ENCODE measurements at regions of chr12 and their contacts with region 1.

Region 1: DNA sequence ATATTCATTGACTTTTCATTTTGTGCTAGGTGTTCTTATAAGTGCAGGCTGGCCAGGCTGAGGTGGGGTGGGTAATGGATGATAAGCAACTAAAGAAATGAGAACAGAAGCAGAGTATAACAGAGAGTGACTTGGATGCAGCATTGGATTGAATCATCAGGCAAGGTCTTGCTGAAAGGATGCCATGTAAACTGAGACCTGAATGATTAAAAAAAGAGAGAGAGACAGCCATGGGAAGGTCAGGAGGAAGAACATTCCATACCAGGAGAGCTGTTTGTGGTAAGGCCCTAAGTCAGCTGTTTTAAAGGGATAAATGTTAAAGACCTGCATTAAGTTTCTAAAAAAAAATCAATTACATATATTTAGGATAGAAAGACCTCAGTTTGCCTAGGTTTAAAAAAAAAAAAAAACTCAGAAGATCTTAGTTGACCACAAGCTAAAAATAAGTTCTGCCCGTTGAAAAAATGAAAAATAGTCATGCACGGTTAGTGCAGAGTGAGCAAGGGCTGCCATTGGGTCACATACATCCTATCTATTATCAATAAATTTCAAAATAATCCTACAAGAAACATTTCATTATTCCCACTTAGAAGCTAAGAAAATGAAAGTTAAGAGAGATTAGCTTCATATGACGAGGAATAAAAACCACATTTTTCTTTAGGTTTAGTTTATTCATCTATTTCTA is 37.2 kb downstream of the IFNG start:
- DNase-seq: no peak
- ATAC-seq: no peak
- H3K4me3 ChIP-seq: no peak overlapping the region
- H3K27ac ChIP-seq: no peak overlapping the region
- H3K4me1 ChIP-seq: no peaks in the 10 kb centered on the region
- H3K27me3 ChIP-seq: peaks cover 10% of the 10 kb centered on the region
- CTCF ChIP-seq: no peak

Region 2: DNA sequence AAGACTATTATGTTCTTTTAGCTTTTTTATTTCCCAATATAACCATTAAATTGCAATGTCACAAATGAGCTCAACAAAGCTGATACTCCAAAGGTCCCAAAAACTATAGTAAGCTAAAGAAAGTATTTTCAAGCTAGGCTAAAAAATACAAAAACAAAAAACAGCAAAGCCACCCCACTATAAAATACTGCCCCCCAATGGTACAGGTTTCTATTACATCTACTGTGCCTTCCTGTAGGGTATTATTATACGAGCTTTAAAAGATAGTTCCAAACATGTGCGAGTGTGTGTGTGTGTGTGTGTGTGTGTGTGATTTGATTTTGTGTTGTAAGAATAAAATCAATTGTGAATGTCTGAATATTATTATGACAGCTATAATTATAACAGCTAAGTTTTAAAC is 36.1 kb after region 1 on chr12:
- CTCF ChIA-PET with region 1: no interaction called
- POLR2A ChIA-PET with region 1: no interaction called
- intact Hi-C with region 1: loop called (anchors 2 kb)
- DNase-seq: peak; percentile 65
- ATAC-seq: no peak
- H3K4me3 ChIP-seq: no peak overlapping the region
- H3K27ac ChIP-seq: no peak overlapping the region
- H3K4me1 ChIP-seq: no peaks in the 10 kb centered on the region
- H3K27me3 ChIP-seq: peaks cover 51% of the 10 kb centered on the region
- CTCF ChIP-seq: peak; percentile 77

Measured in PC-3 (cell line).